ENCODE measurements at regions of chr5 and their contacts with region 1.

Region 1: DNA sequence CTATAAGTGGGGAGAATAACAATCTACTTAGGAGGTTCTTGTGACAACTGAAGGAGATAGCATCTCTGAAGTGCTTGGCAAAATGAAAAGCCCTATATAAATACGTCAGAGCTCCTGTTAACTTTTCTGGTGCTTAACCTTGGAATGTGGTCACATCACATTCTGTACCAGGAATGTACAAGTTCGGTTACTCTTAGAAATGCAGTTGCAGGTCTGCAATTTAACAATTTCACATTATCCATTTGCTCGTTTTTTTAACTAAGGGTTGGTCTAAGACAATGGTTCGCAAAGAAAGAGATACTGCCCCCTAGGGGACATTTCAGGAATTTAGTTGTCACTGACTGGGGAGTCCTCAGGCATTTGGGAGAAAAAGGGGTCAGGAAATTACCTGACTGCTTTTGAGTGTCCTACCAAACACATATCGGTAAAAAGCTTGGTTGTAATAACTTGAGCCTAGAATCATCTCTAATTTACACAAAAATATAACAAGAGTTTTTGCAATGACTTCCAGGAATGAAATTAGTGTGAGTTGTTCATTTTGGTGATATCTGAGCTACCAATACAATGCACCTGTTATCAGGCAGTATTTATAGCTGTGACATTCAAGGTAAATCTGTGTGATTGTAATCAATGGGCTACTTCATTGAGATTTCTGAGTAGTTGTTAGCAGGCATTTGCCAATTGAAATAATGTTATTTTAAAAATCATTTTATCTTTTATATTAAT is 5.4 kb upstream of the HBEGF start:
- DNase-seq: no peak
- H3K4me3 ChIP-seq: no peak overlapping the region
- H3K27ac ChIP-seq: no peak overlapping the region
- H3K27me3 ChIP-seq: no peaks in the 10 kb centered on the region
- CTCF ChIP-seq: peak; percentile 86

Region 2: DNA sequence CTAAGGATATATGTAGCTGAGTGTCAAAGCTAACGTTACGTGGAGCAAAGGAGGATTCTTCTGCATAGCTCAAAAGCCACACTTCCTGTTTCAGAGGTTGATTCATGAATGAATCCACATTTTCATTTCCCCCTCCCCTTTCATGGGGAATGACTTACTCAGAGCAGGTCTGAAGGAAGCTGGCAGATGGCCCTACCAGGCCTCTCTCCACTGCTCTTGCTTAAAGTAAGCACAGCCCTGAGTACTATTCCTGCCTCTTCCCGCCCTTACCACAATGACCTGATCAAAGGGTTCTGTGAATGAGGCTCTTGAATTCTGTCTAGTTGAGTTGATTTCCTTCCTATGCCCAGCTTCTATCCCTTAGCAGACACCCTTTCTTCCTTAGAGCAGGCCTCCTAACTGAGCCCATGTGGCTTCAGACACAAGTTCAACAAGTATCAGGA is 219.8 kb before region 1 on chr5:
- CTCF ChIA-PET with region 1: no interaction called
- POLR2A ChIA-PET with region 1: no interaction called
- DNase-seq: peak; percentile 78
- H3K4me3 ChIP-seq: no peak overlapping the region
- H3K27ac ChIP-seq: peak overlapping the region; percentile 25
- H3K27me3 ChIP-seq: no peaks in the 10 kb centered on the region
- CTCF ChIP-seq: no peak

Region 3: GRCh38 chr5:140230373-140230772 is 121.4 kb before region 1 on chr5:
- CTCF ChIA-PET with region 1: interaction called, 806 read pairs
- POLR2A ChIA-PET with region 1: no interaction called
- DNase-seq: no peak
- H3K4me3 ChIP-seq: no peak overlapping the region
- H3K27ac ChIP-seq: no peak overlapping the region
- H3K27me3 ChIP-seq: peaks cover 3% of the 10 kb centered on the region
- CTCF ChIP-seq: no peak

Region 4: DNA sequence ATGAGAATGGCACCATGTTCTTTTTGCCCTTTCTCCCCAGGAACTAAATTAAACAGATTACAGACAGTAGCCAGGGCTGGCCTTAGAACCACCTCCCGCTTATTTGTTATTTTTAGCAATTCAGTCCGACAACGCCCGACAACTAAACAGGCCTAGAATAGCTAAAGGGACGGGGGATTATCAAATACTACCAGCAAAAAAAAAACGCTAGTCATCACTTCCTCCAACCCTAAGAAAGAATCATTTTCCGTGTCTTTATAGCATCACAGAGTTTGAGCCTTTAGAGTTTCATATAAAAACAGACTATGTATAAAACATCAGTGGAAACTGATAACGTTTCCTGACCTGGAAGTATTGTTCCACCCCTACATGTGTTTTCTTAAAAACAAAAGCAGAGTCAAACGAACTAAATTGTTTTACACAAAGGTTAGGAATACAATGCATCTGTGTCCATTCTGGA is 84.2 kb before region 1 on chr5:
- CTCF ChIA-PET with region 1: interaction called, 98 read pairs
- POLR2A ChIA-PET with region 1: no interaction called
- DNase-seq: no peak
- H3K4me3 ChIP-seq: no peak overlapping the region
- H3K27ac ChIP-seq: no peak overlapping the region
- H3K27me3 ChIP-seq: no peaks in the 10 kb centered on the region
- CTCF ChIP-seq: no peak

Region 5: DNA sequence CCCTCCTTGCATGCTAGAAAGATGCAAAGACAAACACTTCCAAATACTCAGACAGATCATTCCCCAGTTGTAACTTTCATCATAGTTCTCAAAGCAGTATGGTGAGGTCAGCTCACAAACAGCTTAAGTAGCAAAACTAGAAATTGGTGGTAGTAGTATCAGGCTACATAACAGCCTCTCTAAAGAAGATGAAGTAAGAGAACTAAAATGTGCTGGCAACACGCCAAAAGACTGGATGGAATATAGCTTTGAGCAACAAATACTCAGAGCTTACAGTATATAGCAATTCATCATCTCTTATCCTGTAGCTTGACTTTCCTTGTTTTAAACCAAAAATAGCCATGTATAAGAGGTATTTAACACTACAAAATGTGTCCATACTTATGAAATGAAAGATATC is 56.4 kb before region 1 on chr5:
- CTCF ChIA-PET with region 1: interaction called, 13 read pairs
- POLR2A ChIA-PET with region 1: interaction called, 11 read pairs
- DNase-seq: peak; percentile 90
- H3K4me3 ChIP-seq: no peak overlapping the region
- H3K27ac ChIP-seq: no peak overlapping the region
- H3K27me3 ChIP-seq: no peaks in the 10 kb centered on the region
- CTCF ChIP-seq: no peak

Region 6: GRCh38 chr5:140329739-140330481 is 21.9 kb before region 1 on chr5:
- CTCF ChIA-PET with region 1: interaction called, 34 read pairs
- POLR2A ChIA-PET with region 1: interaction called, 8 read pairs
- DNase-seq: no peak
- H3K4me3 ChIP-seq: no peak overlapping the region
- H3K27ac ChIP-seq: no peak overlapping the region
- H3K27me3 ChIP-seq: no peaks in the 10 kb centered on the region
- CTCF ChIP-seq: no peak

Region 7: GRCh38 chr5:140362860-140363630 is 11.3 kb after region 1 on chr5:
- CTCF ChIA-PET with region 1: interaction called, 25 read pairs
- POLR2A ChIA-PET with region 1: interaction called, 6 read pairs
- DNase-seq: no peak
- H3K4me3 ChIP-seq: peak overlapping the region; percentile 47
- H3K27ac ChIP-seq: no peak overlapping the region
- H3K27me3 ChIP-seq: peaks cover 9% of the 10 kb centered on the region
- CTCF ChIP-seq: peak; percentile 90

Measured in AG04450 (cell line).